Mammary epithelial cell (primary cell): ENCODE measurements at regions of chr2 and their contacts with region 1.

Region 1: DNA sequence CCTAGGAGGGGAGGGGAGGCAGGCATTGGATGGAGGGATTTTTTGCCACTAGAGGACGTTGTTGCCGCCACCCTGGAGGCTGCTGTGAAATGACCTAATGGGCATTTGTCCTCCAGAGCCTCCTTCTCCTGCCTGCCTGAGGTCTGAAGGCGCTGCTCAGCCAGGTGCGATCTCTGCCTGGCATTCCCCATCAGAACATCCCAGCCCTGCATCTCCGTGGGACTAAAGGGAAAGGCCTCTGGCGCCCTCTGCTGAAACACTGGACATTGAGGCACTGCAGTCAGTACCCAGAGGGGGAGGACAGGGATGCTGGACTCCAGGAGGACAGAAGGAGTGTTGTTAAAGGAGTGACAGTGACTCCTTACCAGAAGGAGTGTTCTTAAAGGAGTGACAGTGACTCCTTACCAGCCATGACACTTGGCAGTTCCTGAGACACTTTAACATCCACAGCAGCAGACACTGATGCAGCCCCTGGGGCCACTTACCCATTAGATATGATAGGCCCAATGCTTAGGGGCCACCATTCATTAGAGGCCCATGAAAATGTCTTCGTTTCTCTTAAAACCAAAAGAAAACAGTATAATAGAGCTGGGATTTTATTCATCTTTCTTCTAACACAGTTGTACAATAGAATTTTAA is 17.0 kb downstream of the THNSL2 start:
- DNase-seq: peak; percentile 72
- H3K4me3 ChIP-seq: no peak overlapping the region
- H3K27ac ChIP-seq: no peak overlapping the region
- H3K4me1 ChIP-seq: peaks cover 4% of the 10 kb centered on the region
- H3K27me3 ChIP-seq: no peaks in the 10 kb centered on the region
- CTCF ChIP-seq: peak; percentile 78 to 96

Region 2: GRCh38 chr2:88016086-88016959 is 170.8 kb before region 1 on chr2 and contains the start of gene RNU2-63P:
- CTCF ChIA-PET with region 1: no interaction called
- dilution Hi-C with region 1: no loop called
- in situ Hi-C with region 1: no loop called
- intact Hi-C with region 1: loop called (anchors 2 kb)
- DNase-seq: peak; percentile 74
- H3K4me3 ChIP-seq: peak within 1 kb of the TSS; percentile 58 to 66 (median 65)
- H3K27ac ChIP-seq: peak within 1 kb of the TSS; percentile 100
- H3K4me1 ChIP-seq: peaks cover 9% of the 10 kb centered on the region
- H3K27me3 ChIP-seq: no peaks in the 10 kb centered on the region
- CTCF ChIP-seq: no peak
- total RNA-seq, gene RNU2-63P: 6.8 to 94.5 TPM

Region 3: DNA sequence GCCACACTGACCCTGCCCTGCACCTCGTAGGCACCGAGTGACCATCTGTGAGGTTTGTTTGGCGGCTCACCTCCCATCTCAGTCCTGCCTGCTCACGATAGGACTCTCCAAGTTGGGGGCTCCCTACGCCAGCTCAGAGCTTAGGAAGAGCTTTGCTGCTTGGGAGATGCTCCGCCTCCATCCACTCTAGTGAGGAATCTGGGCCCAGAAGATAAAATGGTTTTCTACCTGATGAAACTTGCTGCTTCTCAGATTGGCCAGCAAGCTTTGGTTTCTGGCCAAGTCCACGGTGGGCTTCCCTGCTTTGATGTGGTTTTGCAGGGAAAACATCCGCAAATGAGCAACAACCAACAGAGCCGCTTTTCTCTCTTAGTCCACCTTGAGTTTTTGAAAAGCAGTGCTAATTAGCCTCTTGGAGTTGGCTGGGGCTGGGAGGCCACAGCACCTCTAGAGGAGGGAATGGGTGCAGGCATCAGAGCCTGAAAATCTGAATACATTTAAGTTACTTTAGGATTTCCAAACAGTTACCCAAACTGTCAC is 25.2 kb after region 1 on chr2:
- CTCF ChIA-PET with region 1: no interaction called
- dilution Hi-C with region 1: no loop called
- in situ Hi-C with region 1: no loop called
- intact Hi-C with region 1: loop called (anchors 2 kb)
- DNase-seq: peak; percentile 16
- H3K4me3 ChIP-seq: no peak overlapping the region
- H3K27ac ChIP-seq: no peak overlapping the region
- H3K4me1 ChIP-seq: no peaks in the 10 kb centered on the region
- H3K27me3 ChIP-seq: peaks cover 3% of the 10 kb centered on the region
- CTCF ChIP-seq: peak; percentile 82 to 87

Region 4: GRCh38 chr2:88239781-88240180 is 52.6 kb after region 1 on chr2:
- CTCF ChIA-PET with region 1: no interaction called
- dilution Hi-C with region 1: no loop called
- in situ Hi-C with region 1: no loop called
- intact Hi-C with region 1: no loop called
- DNase-seq: no peak
- H3K4me3 ChIP-seq: no peak overlapping the region
- H3K27ac ChIP-seq: no peak overlapping the region
- H3K4me1 ChIP-seq: no peaks in the 10 kb centered on the region
- H3K27me3 ChIP-seq: peaks cover 3% of the 10 kb centered on the region
- CTCF ChIP-seq: no peak

Region 5: DNA sequence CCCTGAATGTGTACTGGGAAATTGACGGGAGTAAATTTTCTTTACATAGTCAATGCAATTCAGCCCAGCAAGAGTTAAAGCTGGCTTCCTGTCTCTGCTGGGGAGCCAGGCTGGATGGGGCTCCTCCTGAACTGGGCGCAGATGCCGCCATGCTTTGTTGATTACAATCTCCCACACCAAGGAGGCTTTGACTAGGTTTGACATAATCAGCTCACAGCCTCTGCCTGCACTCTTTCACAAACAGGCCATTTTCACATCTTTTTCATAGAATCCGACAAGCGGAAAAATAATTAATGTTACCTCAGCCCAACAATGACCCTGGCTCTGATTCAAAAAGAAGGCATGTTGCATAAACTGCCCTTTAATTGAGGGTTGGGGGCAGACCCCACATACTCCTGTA is 211.0 kb after region 1 on chr2:
- CTCF ChIA-PET with region 1: no interaction called
- dilution Hi-C with region 1: no loop called
- in situ Hi-C with region 1: no loop called
- intact Hi-C with region 1: loop called (anchors 5 kb)
- DNase-seq: no peak
- H3K4me3 ChIP-seq: no peak overlapping the region
- H3K27ac ChIP-seq: no peak overlapping the region
- H3K4me1 ChIP-seq: no peaks in the 10 kb centered on the region
- H3K27me3 ChIP-seq: no peaks in the 10 kb centered on the region
- CTCF ChIP-seq: no peak

Region 6: GRCh38 chr2:88500695-88501094 is 313.5 kb after region 1 on chr2:
- CTCF ChIA-PET with region 1: no interaction called
- dilution Hi-C with region 1: no loop called
- in situ Hi-C with region 1: no loop called
- intact Hi-C with region 1: loop called (anchors 5 kb)
- DNase-seq: peak; percentile 84
- H3K4me3 ChIP-seq: no peak overlapping the region
- H3K27ac ChIP-seq: peak overlapping the region; percentile 80
- H3K4me1 ChIP-seq: peaks cover 40% of the 10 kb centered on the region
- H3K27me3 ChIP-seq: no peaks in the 10 kb centered on the region
- CTCF ChIP-seq: no peak